A549 (cell line): ENCODE measurements at regions of chr20 and their contacts with region 1.

Region 1: DNA sequence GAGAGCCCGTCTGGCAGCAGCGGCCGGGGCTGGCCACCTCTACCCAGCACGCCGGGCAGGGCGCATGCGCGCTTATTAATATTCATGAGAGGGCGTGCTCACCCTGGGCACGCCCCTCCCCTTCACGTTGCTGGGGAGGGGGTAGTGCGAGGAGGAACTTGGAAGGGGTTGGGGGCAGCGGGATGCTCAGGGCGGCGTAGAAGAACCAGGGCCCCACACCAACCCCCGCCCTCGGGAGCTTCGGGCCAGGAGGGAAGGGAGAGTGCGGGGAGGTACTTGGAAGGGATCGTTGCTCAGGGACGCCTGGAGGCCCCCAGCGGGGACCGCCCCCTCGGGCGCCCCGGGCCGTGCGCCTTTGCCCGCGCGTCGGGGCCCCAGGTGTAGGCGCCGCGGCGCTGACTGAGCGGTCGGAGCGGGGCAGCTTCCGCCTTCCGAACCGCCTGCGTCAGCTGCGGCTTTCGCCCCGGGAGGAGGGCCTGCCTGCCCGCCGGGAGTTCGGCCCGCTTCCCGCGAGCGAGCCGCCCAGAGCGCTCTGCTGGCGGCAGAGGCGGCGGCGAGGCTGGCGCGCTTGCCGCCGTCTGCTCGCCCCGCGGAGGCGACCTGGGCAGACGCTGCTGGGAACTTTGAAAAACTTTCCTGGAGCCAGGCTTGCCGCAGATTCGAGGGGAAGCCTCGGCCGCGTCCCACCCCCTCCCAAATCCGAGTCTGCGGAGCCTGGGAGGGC is at the start of gene JAG1:
- DNase-seq: peak; percentile 97 to 99
- ATAC-seq: peak; percentile 73 to 76
- H3K4me3 ChIP-seq: peak within 1 kb of the TSS; percentile 92
- H3K27ac ChIP-seq: peak within 1 kb of the TSS; percentile 95 to 97
- H3K4me1 ChIP-seq: peaks cover 33% of the 10 kb centered on the region
- CTCF ChIP-seq: no peak
- EP300 ChIP-seq: peak in 1 of 2 experiments; percentile 10; a peak in 2 of 5 replicates
- POLR2A ChIP-seq: peak; percentile 42; the same call in 1 of the 2 replicates
- RAD21 ChIP-seq: peak in 1 of 2 experiments; percentile 14; a peak in 1 of 5 replicates
- polyA plus RNA-seq, gene JAG1: 90.0 and 141 TPM in 2 replicates

Region 2: DNA sequence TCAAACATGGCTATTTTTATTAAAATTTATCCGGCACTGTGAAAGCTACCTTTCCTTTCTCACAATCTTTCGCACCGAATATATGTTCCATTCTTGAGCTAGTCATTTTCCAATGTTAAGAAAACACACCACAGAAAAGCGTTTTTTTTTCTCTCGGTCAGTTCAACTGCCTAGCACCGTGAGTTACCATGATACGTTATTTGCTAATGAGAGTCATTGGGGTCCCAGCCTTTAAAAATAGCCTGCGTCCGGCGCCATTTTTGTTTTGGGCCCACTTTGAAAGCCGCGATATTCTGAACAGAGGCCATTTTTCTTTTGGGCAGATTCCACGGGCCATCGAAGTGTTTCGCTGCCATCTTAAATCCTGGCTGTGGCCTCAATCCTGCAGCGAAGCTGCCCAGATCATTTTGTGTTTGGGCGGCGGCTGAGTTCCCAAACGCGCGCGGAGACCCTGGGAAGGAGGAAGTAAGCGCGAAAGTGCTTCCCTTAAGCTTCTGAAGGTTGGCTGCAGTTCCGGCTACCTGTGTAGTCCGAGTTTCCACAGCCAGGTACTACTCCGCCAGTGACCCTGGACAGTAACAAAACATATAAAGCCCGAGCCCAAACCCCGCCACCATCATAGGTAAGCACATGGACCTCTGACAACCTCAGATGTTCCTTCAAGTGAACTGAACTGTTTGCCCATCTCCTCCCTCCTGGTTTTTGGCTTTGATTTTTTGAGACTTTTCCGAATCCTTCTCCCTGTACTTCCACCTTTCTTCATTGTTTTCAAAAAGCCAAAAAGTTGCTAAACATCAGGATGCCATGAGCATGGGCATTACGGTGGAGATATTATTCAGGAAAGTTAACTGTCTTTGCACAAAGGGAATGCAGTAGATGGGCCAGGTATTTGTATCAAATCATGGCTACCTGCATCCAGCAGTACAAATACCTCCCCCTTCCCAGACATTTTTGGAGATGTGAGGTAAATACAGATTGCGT is 239.0 kb before region 1 on chr20 and contains the start of gene SLX4IP:
- CTCF ChIA-PET with region 1: interaction called, 3 read pairs
- POLR2A ChIA-PET with region 1: interaction called, 16 read pairs
- DNase-seq: peak; percentile 90 to 99
- ATAC-seq: peak; percentile 75 to 83
- H3K4me3 ChIP-seq: peak within 1 kb of the TSS; percentile 75
- H3K27ac ChIP-seq: peak within 1 kb of the TSS; percentile 90 to 96
- H3K4me1 ChIP-seq: peaks cover 48% of the 10 kb centered on the region
- CTCF ChIP-seq: no peak
- EP300 ChIP-seq: no peak
- POLR2A ChIP-seq: peak; percentile 73
- RAD21 ChIP-seq: peak in 1 of 2 experiments; percentile 27; a peak in 1 of 5 replicates
- polyA plus RNA-seq, gene SLX4IP: 7.5 and 8.0 TPM in 2 replicates

Region 3: DNA sequence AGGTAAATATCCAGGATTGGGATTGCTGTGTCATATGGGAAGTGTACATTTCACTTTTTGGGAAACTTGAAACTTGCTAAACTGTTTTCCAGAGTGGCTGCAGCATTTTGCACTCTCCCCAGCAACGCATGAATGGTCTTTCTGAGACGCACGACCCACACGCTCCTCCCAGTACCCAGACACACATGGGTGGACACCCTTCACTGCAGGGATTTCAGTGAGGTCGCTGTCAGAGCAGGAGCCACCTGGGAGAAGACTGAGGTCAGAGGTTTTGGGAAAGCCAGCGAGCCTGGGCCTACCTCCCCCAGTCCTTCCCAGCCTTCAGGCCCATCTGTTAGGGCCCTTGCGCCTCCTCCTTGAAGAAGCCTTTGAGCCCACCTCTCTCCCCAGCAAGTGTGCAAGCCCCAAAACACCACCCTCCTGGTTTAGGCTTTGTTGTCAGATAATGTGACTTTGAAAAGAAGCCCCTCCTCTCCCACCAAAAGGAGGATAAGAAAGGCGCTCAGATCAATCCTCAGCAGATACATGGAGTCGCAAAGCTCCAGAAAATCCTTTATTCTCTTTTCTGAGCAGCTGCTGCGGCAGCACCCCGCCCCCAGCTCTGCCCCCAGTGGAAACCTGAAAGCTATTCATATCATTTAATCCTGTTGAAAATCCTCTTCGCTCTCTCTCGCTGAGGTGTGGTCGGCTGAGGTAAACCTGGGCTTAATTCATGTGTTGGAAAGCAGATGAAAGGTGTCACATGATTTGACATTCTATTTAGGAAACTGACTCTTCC is 12.4 kb after region 1 on chr20:
- CTCF ChIA-PET with region 1: interaction called, 30 read pairs
- POLR2A ChIA-PET with region 1: interaction called, 7 read pairs
- DNase-seq: no peak
- ATAC-seq: no peak
- H3K4me3 ChIP-seq: no peak overlapping the region
- H3K27ac ChIP-seq: peak overlapping the region in 1 of 2 experiments; percentile 18; a peak in 1 of 6 replicates
- H3K4me1 ChIP-seq: no peaks in the 10 kb centered on the region
- CTCF ChIP-seq: no peak
- EP300 ChIP-seq: no peak
- POLR2A ChIP-seq: no peak
- RAD21 ChIP-seq: no peak

Region 4: DNA sequence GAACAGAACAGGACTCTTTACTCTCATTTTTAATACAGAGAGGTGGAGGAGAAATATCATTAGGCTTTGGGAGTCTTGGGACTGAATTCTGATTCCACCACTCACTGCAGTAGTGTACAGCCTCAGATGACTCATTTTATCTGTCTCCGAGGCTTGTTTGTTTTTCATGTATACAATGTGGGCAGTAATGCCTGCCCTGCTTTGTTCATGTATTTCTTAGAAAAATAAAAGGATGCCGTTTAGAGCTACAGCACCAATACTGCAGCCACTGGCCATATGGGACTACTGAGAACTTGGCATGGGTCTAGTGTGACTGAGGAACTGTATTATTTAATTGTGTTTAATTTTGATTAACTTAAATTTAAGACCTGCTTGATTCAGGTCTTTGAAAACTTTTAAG is 40.9 kb after region 1 on chr20:
- CTCF ChIA-PET with region 1: interaction called, 31 read pairs
- POLR2A ChIA-PET with region 1: interaction called, 14 read pairs
- DNase-seq: peak; percentile 68 to 72
- ATAC-seq: peak; percentile 62 to 73; a peak in 5 of 6 replicates
- H3K4me3 ChIP-seq: no peak overlapping the region
- H3K27ac ChIP-seq: peak overlapping the region; percentile 85 to 86
- H3K4me1 ChIP-seq: peaks cover 93% of the 10 kb centered on the region
- CTCF ChIP-seq: no peak
- EP300 ChIP-seq: peak; percentile 25 to 49; a peak in 1 of 5 replicates
- POLR2A ChIP-seq: no peak
- RAD21 ChIP-seq: peak; percentile 43 to 49; a peak in 3 of 5 replicates

Region 5: DNA sequence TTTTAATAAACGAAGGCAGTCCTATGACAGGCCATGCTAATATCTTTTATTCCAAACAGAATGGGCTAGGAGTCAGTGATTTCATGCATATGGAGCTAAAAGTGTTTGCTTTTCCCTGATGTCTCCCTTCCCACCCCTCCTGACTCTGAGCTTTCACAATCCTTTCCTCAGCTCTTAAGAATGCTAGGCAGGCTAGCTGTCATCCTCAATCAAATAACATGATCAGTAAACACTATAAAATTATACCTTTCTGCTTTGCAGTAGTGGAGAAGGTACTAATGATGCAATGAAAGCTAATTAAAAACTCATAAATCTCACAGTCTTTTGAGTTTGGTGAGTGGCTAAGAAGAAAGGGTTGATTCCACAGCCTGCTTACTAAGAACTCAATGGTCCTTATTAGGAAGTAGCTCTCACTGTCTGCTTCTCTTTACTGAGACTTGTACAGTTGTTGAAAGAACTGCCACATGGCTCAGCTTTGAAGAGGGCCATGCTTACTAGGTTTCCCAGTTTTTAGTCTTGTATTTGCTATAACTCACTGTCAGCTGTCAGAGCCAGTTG is 250.6 kb after region 1 on chr20:
- CTCF ChIA-PET with region 1: interaction called, 5 read pairs
- POLR2A ChIA-PET with region 1: interaction called, 16 read pairs
- DNase-seq: peak in 1 of 2 experiments; percentile 82
- ATAC-seq: peak; percentile 71 to 84
- H3K4me3 ChIP-seq: no peak overlapping the region
- H3K27ac ChIP-seq: peak overlapping the region; percentile 32 to 81
- H3K4me1 ChIP-seq: peaks cover 66% of the 10 kb centered on the region
- CTCF ChIP-seq: no peak
- EP300 ChIP-seq: peak; percentile 31 to 32; a peak in 1 of 5 replicates
- POLR2A ChIP-seq: no peak
- RAD21 ChIP-seq: peak in 1 of 2 experiments; percentile 30; a peak in 2 of 5 replicates

Region 6: GRCh38 chr20:11216451-11217314 is 542.5 kb after region 1 on chr20:
- CTCF ChIA-PET with region 1: interaction called, 6 read pairs
- POLR2A ChIA-PET with region 1: interaction called, 16 read pairs
- DNase-seq: peak; percentile 16 to 81
- ATAC-seq: peak; percentile 69 to 91
- H3K4me3 ChIP-seq: no peak overlapping the region
- H3K27ac ChIP-seq: peak overlapping the region; percentile 70 to 85
- H3K4me1 ChIP-seq: peaks cover 34% of the 10 kb centered on the region
- CTCF ChIP-seq: no peak
- EP300 ChIP-seq: peak in 1 of 2 experiments; percentile 78; a peak in 4 of 5 replicates
- POLR2A ChIP-seq: no peak
- RAD21 ChIP-seq: peak; percentile 21 to 36; a peak in 2 of 5 replicates

Region 7: GRCh38 chr20:11274141-11274594 is 600.0 kb after region 1 on chr20:
- CTCF ChIA-PET with region 1: interaction called, 20 read pairs
- POLR2A ChIA-PET with region 1: interaction called, 9 read pairs
- DNase-seq: peak; percentile 86 to 90
- ATAC-seq: peak; percentile 93 to 95
- H3K4me3 ChIP-seq: no peak overlapping the region
- H3K27ac ChIP-seq: peak overlapping the region; percentile 62 to 70
- H3K4me1 ChIP-seq: peaks cover 36% of the 10 kb centered on the region
- CTCF ChIP-seq: peak; percentile 96
- EP300 ChIP-seq: no peak
- POLR2A ChIP-seq: no peak
- RAD21 ChIP-seq: peak; percentile 99 to 100